ENCODE measurements at regions of chr20 and their contacts with region 1.

Region 1: GRCh38 chr20:9978397-9979004 is 56.3 kb upstream of the ANKEF1 start:
- DNase-seq: peak in 7 of 9 donors; percentile 46 to 73 (median 60)
- ATAC-seq: peak; percentile 93
- H3K4me3 ChIP-seq: no peak overlapping the region
- H3K4me3 Mint-ChIP-seq: no peak overlapping the region
- H3K27ac ChIP-seq: no peak overlapping the region
- H3K27ac Mint-ChIP-seq: peak overlapping the region in 1 of 9 donors; percentile 73
- H3K4me1 ChIP-seq: no peaks in the 10 kb centered on the region
- H3K4me1 Mint-ChIP-seq: peaks cover 0 to 4% (median 0%) of the 10 kb centered on the region in 7 donors
- H3K27me3 ChIP-seq: no peaks in the 10 kb centered on the region
- H3K27me3 Mint-ChIP-seq: peaks cover 0 to 15% (median 6%) of the 10 kb centered on the region in 5 donors

Region 2: GRCh38 chr20:9616833-9617489 is 361.5 kb before region 1 on chr20:
- CTCF ChIA-PET with region 1: no interaction called
- POLR2A ChIA-PET with region 1: no interaction called
- intact Hi-C with region 1: loop called in 1 of 2 experiments (anchors 5 kb)
- DNase-seq: peak in 7 of 9 donors; percentile 12 to 37 (median 21)
- ATAC-seq: peak; percentile 57
- H3K4me3 ChIP-seq: no peak overlapping the region
- H3K4me3 Mint-ChIP-seq: no peak overlapping the region
- H3K27ac ChIP-seq: no peak overlapping the region
- H3K27ac Mint-ChIP-seq: no peak overlapping the region
- H3K4me1 ChIP-seq: no peaks in the 10 kb centered on the region
- H3K4me1 Mint-ChIP-seq: no peaks in the 10 kb centered on the region
- H3K27me3 ChIP-seq: no peaks in the 10 kb centered on the region
- H3K27me3 Mint-ChIP-seq: peaks cover 0 to 18% (median 14%) of the 10 kb centered on the region in 5 donors

Region 3: GRCh38 chr20:10219452-10219791 is 240.9 kb after region 1 on chr20:
- CTCF ChIA-PET with region 1: no interaction called
- POLR2A ChIA-PET with region 1: no interaction called
- intact Hi-C with region 1: loop called in 1 of 2 experiments (anchors 5 kb)
- DNase-seq: peak; percentile 25 to 80 (median 51)
- ATAC-seq: peak; percentile 90
- H3K4me3 ChIP-seq: no peak overlapping the region
- H3K4me3 Mint-ChIP-seq: peak overlapping the region in 7 of 10 donors; percentile 20 to 73 (median 67)
- H3K27ac ChIP-seq: no peak overlapping the region
- H3K27ac Mint-ChIP-seq: no peak overlapping the region
- H3K4me1 ChIP-seq: no peaks in the 10 kb centered on the region
- H3K4me1 Mint-ChIP-seq: peaks cover 5 to 25% (median 16%) of the 10 kb centered on the region in 7 donors
- H3K27me3 ChIP-seq: peaks cover 0 to 4% of the 10 kb centered on the region in 2 donors
- H3K27me3 Mint-ChIP-seq: peaks cover 31 to 84% (median 65%) of the 10 kb centered on the region in 5 donors

Region 4: GRCh38 chr20:10536531-10536930 is 558.0 kb after region 1 on chr20:
- CTCF ChIA-PET with region 1: no interaction called
- POLR2A ChIA-PET with region 1: no interaction called
- intact Hi-C with region 1: loop called (anchors 1 to 5 kb)
- DNase-seq: peak in 1 of 9 donors; percentile 9
- ATAC-seq: no peak
- H3K4me3 ChIP-seq: no peak overlapping the region
- H3K4me3 Mint-ChIP-seq: no peak overlapping the region
- H3K27ac ChIP-seq: no peak overlapping the region
- H3K27ac Mint-ChIP-seq: no peak overlapping the region
- H3K4me1 ChIP-seq: peaks cover 0 to 13% of the 10 kb centered on the region in 2 donors
- H3K4me1 Mint-ChIP-seq: peaks cover 10 to 34% (median 25%) of the 10 kb centered on the region in 7 donors
- H3K27me3 ChIP-seq: no peaks in the 10 kb centered on the region
- H3K27me3 Mint-ChIP-seq: no peaks in the 10 kb centered on the region

Region 5: GRCh38 chr20:11204926-11205768 is 1226.6 kb after region 1 on chr20:
- CTCF ChIA-PET with region 1: no interaction called
- POLR2A ChIA-PET with region 1: no interaction called
- intact Hi-C with region 1: loop called in 1 of 2 experiments (anchors 1 kb)
- DNase-seq: peak in 2 of 9 donors; percentile 0 to 2
- ATAC-seq: peak; percentile 66
- H3K4me3 ChIP-seq: no peak overlapping the region
- H3K4me3 Mint-ChIP-seq: no peak overlapping the region
- H3K27ac ChIP-seq: no peak overlapping the region
- H3K27ac Mint-ChIP-seq: no peak overlapping the region
- H3K4me1 ChIP-seq: no peaks in the 10 kb centered on the region
- H3K4me1 Mint-ChIP-seq: peaks cover 0 to 4% (median 0%) of the 10 kb centered on the region in 7 donors
- H3K27me3 ChIP-seq: no peaks in the 10 kb centered on the region
- H3K27me3 Mint-ChIP-seq: peaks cover 0 to 5% (median 0%) of the 10 kb centered on the region in 5 donors

Region 6: DNA sequence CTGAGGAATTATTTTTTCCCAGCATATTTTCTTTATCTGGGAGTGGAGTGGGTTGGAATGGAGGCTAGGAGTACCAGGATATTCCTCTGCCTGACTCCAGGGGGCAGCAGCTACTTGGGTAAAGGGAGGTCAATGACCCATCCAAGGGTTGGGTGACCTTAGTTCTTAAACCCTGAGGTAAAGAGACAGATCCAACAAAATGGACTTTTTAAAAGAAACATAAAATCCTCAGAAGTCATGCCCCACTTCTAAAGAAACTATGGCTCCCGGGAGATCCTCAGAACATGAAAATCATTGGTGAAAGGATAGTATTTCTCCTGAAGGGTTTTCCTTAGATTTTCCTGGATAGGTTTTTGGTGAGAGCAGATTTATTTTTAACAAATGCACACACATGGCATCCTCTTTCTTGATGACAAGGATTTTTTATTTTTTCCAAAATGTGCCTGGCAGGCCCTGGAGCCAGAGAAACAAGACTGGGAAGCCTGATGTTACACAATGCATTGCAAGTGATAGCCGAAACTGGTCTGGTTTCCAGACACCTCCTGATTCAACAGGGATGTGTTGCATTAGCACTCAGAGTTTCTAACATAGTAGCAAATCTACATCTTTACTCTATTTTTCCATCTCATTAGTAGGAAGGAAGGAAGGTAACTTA is 1698.3 kb after region 1 on chr20:
- CTCF ChIA-PET with region 1: no interaction called
- POLR2A ChIA-PET with region 1: no interaction called
- intact Hi-C with region 1: no loop called
- DNase-seq: no peak
- ATAC-seq: no peak
- H3K4me3 ChIP-seq: no peak overlapping the region
- H3K4me3 Mint-ChIP-seq: no peak overlapping the region
- H3K27ac ChIP-seq: no peak overlapping the region
- H3K27ac Mint-ChIP-seq: no peak overlapping the region
- H3K4me1 ChIP-seq: no peaks in the 10 kb centered on the region
- H3K4me1 Mint-ChIP-seq: no peaks in the 10 kb centered on the region
- H3K27me3 ChIP-seq: no peaks in the 10 kb centered on the region
- H3K27me3 Mint-ChIP-seq: no peaks in the 10 kb centered on the region

Measured in naive thymus-derived CD4-positive, alpha-beta T cell (primary cell).